ENCODE measurements at regions of chr6 and their contacts with region 1.

Region 1: DNA sequence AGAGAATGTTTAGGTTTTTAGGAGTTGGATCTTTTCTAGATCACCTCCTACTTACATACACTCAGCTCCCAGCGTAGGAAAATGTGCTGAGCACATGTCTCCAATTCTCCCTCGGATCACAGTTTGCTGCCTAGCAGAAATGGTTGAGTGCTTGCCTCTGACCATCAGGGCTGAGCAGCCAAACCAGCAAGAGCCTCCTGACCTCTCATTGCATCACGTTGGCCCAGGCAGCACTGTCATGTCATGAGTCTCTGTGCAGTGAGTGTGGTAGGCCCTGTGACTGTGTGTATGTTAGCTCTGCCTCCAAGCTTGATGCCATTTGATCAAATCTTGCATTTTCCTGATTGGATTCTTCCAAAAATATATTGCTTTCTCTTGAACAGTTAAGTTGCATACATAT is 112.0 kb downstream of the LRRC1 start:
- DNase-seq: peak; percentile 4
- H3K4me3 Mint-ChIP-seq: no peak overlapping the region
- H3K27ac Mint-ChIP-seq: no peak overlapping the region
- H3K4me1 Mint-ChIP-seq: no peaks in the 10 kb centered on the region
- H3K27me3 Mint-ChIP-seq: no peaks in the 10 kb centered on the region
- CTCF ChIP-seq: no peak

Region 2: GRCh38 chr6:53230775-53231467 is 675.9 kb before region 1 on chr6:
- CTCF ChIA-PET with region 1: interaction called, 10 read pairs
- POLR2A ChIA-PET with region 1: no interaction called
- intact Hi-C with region 1: no loop called
- DNase-seq: no peak
- H3K4me3 Mint-ChIP-seq: no peak overlapping the region
- H3K27ac Mint-ChIP-seq: no peak overlapping the region
- H3K4me1 Mint-ChIP-seq: no peaks in the 10 kb centered on the region
- H3K27me3 Mint-ChIP-seq: no peaks in the 10 kb centered on the region
- CTCF ChIP-seq: no peak

Region 3: GRCh38 chr6:53956068-53956711 is 49.3 kb after region 1 on chr6:
- CTCF ChIA-PET with region 1: no interaction called
- POLR2A ChIA-PET with region 1: no interaction called
- intact Hi-C with region 1: no loop called
- DNase-seq: peak; percentile 70
- H3K4me3 Mint-ChIP-seq: no peak overlapping the region
- H3K27ac Mint-ChIP-seq: no peak overlapping the region
- H3K4me1 Mint-ChIP-seq: no peaks in the 10 kb centered on the region
- H3K27me3 Mint-ChIP-seq: no peaks in the 10 kb centered on the region
- CTCF ChIP-seq: peak; percentile 67

Region 4: DNA sequence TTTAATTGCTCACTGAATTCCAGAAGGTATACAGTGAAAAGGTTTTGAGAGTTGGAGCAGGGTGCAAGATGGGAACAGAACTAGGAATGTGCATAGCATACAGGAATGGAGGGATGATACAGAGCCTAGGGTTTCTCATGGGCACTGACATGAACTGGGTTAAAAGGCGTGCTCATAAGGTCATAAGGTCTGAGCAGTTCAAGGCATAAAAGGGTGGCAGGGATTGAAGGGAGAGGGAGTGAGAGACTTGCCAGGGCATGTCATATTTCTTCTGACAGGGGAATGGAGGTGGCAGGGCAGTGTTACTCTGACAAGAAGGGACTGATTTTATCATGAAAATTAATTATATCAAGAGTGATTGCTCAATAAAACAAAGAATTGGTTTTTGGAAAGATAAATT is 209.1 kb after region 1 on chr6:
- CTCF ChIA-PET with region 1: no interaction called
- POLR2A ChIA-PET with region 1: no interaction called
- intact Hi-C with region 1: no loop called
- DNase-seq: no peak
- H3K4me3 Mint-ChIP-seq: no peak overlapping the region
- H3K27ac Mint-ChIP-seq: peak overlapping the region; percentile 90
- H3K4me1 Mint-ChIP-seq: peaks cover 19% of the 10 kb centered on the region
- H3K27me3 Mint-ChIP-seq: no peaks in the 10 kb centered on the region
- CTCF ChIP-seq: no peak

Measured in MCF 10A (cell line).